ENCODE measurements at regions of chr5 and their contacts with region 1.

Region 1: DNA sequence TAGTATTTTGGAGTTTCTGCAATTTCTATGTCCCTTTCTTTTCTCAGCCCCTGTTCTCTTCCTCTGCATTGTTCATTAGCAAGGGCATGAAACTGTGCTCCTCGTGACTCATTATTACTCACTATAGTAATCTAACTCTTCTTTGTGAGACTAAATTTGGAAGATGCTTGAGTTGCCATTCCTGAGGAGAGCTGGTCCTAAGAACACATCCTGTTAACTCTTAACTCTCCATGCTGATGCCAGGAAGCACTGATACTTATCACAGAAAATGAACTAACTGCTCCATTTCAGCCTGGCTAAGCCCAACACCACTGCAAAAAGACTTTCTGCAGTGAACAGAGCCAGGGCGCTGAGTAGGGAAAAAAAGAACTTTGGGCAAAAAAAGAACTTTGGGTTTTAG is 10.6 kb upstream of the CSNK1A1 start:
- DNase-seq: peak; percentile 91
- H3K4me3 ChIP-seq: peak overlapping the region in 1 of 3 experiments; percentile 54
- H3K27ac ChIP-seq: peak overlapping the region; percentile 71
- H3K4me1 ChIP-seq: peaks cover 39% of the 10 kb centered on the region
- H3K27me3 ChIP-seq: no peaks in the 10 kb centered on the region
- CTCF ChIP-seq: no peak
- POLR2A ChIP-seq: peak; percentile 37

Region 2: DNA sequence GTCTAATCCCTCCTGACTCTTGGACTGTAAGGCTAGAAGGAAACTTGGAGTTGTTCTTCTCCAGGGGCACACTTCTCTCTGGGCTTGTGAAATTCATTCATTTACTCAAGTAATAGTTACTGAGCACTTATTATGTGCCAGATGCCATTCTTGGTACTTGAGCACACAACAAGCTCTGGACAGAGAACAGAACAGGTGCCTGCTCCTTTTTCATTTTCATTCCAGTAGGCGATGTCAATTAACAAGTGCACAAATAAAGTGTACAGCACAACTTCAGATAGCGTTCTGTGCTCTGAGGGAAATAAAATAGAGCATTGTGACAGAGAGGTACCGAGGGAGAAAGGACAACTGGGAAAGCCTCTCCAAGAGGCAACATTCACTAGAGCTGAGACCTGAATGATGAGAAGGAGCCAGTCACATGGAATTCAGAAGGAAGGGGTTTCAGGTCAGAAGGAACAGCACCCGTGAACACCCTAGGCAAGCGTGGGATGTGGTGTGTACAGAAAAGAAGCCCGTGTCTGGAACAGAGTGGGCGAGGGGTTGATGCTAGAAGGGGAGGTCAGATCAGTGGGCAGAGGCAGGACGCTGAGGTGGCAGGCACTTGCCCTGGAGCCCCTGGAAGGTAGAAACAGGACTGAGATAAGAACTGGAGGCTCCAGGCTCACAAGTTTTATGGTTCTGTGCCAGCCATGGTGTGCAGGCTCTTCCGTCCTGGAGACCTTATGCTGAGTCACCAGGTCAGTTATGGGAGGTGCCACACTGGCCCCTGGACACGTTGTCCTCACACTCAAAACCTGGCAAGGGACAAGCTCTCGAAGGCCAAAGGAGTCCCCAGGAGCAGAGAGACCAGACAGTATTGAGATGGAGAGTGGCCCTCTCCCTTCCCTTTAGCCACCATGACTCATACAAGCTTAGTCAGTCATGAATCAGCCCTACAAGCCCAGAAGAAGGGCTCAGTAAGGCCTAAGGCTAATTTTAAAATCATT is 427.8 kb before region 1 on chr5:
- CTCF ChIA-PET with region 1: no interaction called
- POLR2A ChIA-PET with region 1: no interaction called
- dilution Hi-C with region 1: no loop called
- intact Hi-C with region 1: loop called (anchors 2 kb)
- DNase-seq: peak; percentile 79
- H3K4me3 ChIP-seq: no peak overlapping the region
- H3K27ac ChIP-seq: peak overlapping the region; percentile 96
- H3K4me1 ChIP-seq: peaks cover 36% of the 10 kb centered on the region
- H3K27me3 ChIP-seq: no peaks in the 10 kb centered on the region
- CTCF ChIP-seq: no peak
- POLR2A ChIP-seq: no peak

Region 3: GRCh38 chr5:149367249-149367971 is 194.4 kb before region 1 on chr5:
- CTCF ChIA-PET with region 1: interaction called, 25 read pairs
- POLR2A ChIA-PET with region 1: no interaction called
- dilution Hi-C with region 1: no loop called
- intact Hi-C with region 1: no loop called
- DNase-seq: peak; percentile 64
- H3K4me3 ChIP-seq: no peak overlapping the region
- H3K27ac ChIP-seq: no peak overlapping the region
- H3K4me1 ChIP-seq: no peaks in the 10 kb centered on the region
- H3K27me3 ChIP-seq: no peaks in the 10 kb centered on the region
- CTCF ChIP-seq: peak; percentile 76 to 83
- POLR2A ChIP-seq: no peak

Region 4: DNA sequence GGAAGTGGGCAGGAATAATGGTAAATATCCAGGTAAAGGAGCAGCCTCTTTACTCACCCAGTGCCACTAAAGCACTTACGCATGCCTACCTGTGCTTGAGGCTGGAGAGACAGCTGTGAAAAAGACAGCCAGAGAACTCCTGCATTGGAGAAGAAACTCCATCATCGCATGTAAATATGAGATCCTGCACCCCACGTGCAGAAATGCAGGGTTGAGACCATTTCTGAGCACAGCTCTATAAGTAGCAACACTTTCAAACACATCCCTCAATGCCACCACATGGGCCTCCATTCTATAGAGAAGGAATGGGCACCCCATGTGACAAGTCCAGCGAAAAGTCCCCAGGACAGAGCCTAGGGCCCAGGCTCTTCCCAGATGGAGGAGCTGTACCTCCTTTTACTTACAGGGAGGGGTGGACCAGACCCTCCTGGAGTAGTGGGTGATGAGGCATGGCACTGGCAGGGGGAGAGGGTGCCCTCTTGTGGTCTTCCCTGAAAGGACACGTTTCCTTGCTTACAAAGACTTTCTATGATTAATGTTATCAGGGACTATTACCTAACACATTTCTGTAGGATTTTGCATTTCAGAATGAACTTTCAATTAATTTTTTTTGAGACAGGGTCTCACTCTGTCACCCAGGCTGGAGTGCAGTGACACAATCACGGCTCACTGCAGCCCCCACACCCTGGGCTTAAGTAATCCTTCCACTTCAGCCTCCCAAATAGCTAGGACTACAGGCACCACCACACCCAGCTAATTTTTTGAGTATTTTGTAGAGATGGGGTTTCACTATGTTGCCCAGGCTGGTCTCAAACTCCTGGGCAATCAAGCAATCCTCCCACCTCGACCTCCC is 127.5 kb before region 1 on chr5:
- CTCF ChIA-PET with region 1: interaction called, 39 read pairs
- POLR2A ChIA-PET with region 1: interaction called, 6 read pairs
- dilution Hi-C with region 1: no loop called
- intact Hi-C with region 1: loop called (anchors 1 kb)
- DNase-seq: peak; percentile 64
- H3K4me3 ChIP-seq: no peak overlapping the region
- H3K27ac ChIP-seq: no peak overlapping the region
- H3K4me1 ChIP-seq: peaks cover 14% of the 10 kb centered on the region
- H3K27me3 ChIP-seq: no peaks in the 10 kb centered on the region
- CTCF ChIP-seq: peak; percentile 82 to 85
- POLR2A ChIP-seq: no peak

Region 5: GRCh38 chr5:149464796-149465489 is 96.9 kb before region 1 on chr5:
- CTCF ChIA-PET with region 1: no interaction called
- POLR2A ChIA-PET with region 1: no interaction called
- dilution Hi-C with region 1: no loop called
- intact Hi-C with region 1: no loop called
- DNase-seq: peak; percentile 93
- H3K4me3 ChIP-seq: no peak overlapping the region
- H3K27ac ChIP-seq: peak overlapping the region; percentile 39
- H3K4me1 ChIP-seq: peaks cover 20% of the 10 kb centered on the region
- H3K27me3 ChIP-seq: no peaks in the 10 kb centered on the region
- CTCF ChIP-seq: no peak
- POLR2A ChIP-seq: no peak

Region 6: DNA sequence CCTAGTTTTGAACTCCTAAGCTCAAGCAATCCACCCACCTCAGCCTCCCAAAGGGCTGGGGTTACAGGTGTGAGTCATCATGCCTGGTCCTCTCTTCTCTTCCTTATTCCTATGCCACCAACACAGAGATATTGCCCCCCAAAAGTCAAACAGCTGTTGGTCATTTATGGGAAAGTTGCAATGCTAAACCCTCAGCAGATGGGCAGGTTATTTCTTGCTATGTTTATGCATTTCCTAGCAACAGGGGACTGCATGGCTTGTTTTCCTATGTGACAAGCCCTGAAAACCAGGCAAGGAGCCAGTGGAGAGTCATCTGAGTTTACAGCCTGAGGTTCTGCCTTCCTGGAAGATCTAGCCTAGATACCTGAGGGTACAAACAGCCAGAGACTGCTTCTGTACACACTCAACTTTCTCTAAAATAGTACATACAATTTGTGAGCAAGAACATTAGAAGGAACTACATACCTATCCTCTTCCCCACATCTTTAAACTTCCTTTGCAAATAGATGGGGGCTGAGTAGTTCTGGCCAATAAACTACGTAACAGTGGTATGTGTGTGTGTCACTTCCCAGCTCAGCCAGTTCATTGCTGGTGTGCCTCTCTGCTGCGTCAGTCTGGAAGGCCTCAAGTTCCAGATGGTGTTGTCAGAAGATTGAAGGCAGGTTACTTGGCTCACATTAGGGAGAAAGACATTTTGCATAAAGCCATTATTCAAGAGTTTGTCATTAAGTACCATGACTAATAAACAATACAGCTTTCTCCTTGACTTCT is 76.0 kb before region 1 on chr5:
- CTCF ChIA-PET with region 1: interaction called, 3 read pairs
- POLR2A ChIA-PET with region 1: no interaction called
- dilution Hi-C with region 1: no loop called
- intact Hi-C with region 1: loop called (anchors 1 kb)
- DNase-seq: peak; percentile 98
- H3K4me3 ChIP-seq: no peak overlapping the region
- H3K27ac ChIP-seq: peak overlapping the region; percentile 75
- H3K4me1 ChIP-seq: peaks cover 22% of the 10 kb centered on the region
- H3K27me3 ChIP-seq: no peaks in the 10 kb centered on the region
- CTCF ChIP-seq: no peak
- POLR2A ChIP-seq: peak; percentile 1

Region 7: GRCh38 chr5:149581192-149581861 is 19.5 kb after region 1 on chr5 and contains the start of gene ARHGEF37:
- CTCF ChIA-PET with region 1: interaction called, 8 read pairs
- POLR2A ChIA-PET with region 1: interaction called, 6 read pairs
- dilution Hi-C with region 1: no loop called
- intact Hi-C with region 1: loop called (anchors 1 kb)
- DNase-seq: peak; percentile 93
- H3K4me3 ChIP-seq: peak within 1 kb of the TSS; percentile 14 to 54 (median 34)
- H3K27ac ChIP-seq: peak within 1 kb of the TSS; percentile 83
- H3K4me1 ChIP-seq: peaks cover 29% of the 10 kb centered on the region
- H3K27me3 ChIP-seq: no peaks in the 10 kb centered on the region
- CTCF ChIP-seq: no peak
- POLR2A ChIP-seq: peak; percentile 31
- total RNA-seq, gene ARHGEF37: 7.0 and 7.1 TPM in 2 replicates

Measured in endothelial cell of umbilical vein (primary cell).